Common myeloid progenitor, CD34-positive (primary cell): ENCODE measurements at regions of chr3 and their contacts with region 1.

Region 1: GRCh38 chr3:177050501-177051237 is 146.6 kb downstream of the TBL1XR1 start:
- DNase-seq: peak; percentile 61 to 81 (median 77)
- H3K4me3 ChIP-seq: no peak overlapping the region
- H3K27ac ChIP-seq: no peak overlapping the region
- H3K4me1 ChIP-seq: peaks cover 0 to 12% (median 0%) of the 10 kb centered on the region in 4 experiments
- H3K27me3 ChIP-seq: no peaks in the 10 kb centered on the region

Region 2: DNA sequence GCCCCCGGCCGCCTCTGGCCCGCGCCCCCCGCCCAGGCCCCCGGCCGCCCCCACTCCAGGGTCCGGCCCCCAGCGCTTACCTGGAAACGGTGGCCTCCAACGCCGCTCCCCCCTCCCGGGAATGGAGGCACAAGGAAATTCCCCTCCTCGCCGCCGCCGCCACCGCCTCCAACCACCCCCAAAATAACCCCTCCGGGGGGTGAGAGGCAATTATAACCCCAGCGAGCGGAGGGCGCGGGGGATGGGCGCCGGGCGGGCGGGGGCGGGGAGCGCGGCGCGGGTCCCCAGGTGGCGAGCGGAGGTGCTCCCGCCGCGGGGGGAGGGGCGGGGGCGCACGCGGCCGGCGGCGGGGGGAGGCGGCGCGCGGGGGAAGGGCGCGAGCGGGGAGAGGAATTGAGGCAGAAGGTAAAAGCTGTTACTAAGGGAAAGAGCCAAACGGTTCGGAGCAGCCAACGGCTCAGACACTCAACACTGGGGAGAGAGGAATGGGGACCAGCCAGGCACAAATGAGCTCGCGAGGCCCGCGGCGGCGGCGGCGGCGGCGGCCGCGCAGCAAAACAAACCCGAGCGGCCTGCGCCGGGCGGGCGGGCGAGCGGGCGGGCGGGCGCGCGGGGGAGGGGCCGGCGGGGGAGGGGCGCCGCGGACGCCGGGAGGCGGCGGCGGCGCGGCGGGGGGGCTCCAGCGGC is 146.5 kb after region 1 on chr3 and contains the start of gene TBL1XR1:
- CTCF ChIA-PET with region 1: interaction called, 11 read pairs
- POLR2A ChIA-PET with region 1: interaction called, 3 read pairs
- DNase-seq: peak; percentile 92 to 97 (median 97)
- H3K4me3 ChIP-seq: peak within 1 kb of the TSS; percentile 66 to 97 (median 93)
- H3K27ac ChIP-seq: peak within 1 kb of the TSS; percentile 93 to 95
- H3K4me1 ChIP-seq: peaks cover 24 to 40% (median 34%) of the 10 kb centered on the region in 4 experiments
- H3K27me3 ChIP-seq: no peaks in the 10 kb centered on the region

Region 3: DNA sequence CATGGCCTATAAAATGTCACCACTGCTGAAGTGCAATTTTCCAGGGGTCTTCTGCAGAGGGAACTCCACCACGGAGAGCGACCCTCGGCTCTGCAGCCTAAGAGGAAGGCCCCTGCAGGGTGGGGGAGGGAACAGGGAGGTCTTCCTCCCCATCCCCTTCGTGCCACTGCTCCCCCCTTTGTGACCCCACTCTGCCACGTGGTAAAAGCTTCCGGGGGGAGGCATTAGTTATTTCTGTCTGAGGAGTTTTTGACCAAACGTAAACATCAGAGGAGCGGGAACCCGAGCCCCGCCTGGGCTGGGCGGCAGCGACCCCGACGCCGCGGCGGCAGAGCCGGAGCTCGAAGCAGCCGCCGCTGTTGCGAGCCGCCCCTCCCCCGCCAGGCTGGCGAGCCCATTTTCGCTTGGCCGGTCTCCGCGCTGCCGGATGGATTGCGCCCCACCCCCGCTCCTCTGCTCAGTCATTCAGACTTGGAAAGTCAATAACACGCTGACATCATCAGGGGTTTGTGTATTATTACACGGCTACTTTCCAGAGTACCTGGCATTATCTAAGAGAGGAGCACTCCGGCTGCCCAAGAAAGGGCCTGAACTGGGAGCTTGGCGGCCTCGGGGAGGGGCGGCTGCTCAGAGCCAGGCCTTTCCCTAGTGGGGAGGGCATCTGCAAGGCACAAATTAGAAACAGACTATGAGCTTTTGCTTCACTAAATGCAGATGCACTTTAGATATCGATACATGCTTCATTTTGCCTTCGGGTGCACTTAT is 309.1 kb after region 1 on chr3:
- CTCF ChIA-PET with region 1: interaction called, 17 read pairs
- POLR2A ChIA-PET with region 1: interaction called, 6 read pairs
- DNase-seq: peak; percentile 96 to 98 (median 98)
- H3K4me3 ChIP-seq: peak overlapping the region in 6 of 7 experiments; percentile 57 to 85 (median 70)
- H3K27ac ChIP-seq: peak overlapping the region; percentile 86 to 95
- H3K4me1 ChIP-seq: peaks cover 28 to 61% (median 52%) of the 10 kb centered on the region in 4 experiments
- H3K27me3 ChIP-seq: no peaks in the 10 kb centered on the region

Region 4: DNA sequence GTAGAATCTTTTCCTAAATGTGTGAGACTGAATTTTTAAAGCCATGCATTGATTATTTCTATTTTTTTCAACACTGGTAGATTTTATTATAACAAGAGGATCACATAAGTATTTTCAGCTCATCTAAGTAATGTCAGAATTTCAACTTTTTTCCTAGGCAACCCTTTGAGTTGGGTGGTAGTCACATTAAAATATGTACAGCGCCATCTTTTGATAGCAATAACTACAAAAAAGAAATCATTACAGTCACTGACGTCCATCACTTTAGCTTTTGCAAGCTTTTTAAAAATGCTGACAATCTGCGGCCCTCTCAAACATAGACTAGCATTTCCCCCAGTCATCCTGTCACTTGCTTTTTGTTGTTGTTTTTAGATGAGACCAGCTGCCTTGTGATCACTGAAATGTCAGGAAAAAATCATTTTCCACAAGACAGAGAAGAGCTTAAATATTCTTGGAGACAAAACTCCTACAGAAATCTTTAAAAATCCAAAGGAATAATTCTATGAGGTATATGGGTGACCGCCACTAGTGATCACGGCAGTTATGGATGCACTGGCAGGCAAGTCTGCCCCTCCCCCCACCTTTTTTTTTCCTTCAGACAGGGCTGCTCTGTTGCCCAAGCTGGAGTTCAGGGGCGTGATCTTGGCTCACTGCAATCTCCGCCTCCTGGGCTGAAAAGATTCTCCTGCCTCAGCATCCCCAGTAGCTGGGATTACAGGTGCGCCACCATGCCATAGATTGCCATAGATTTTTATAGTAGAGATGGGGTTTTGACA is 1101.5 kb after region 1 on chr3:
- CTCF ChIA-PET with region 1: interaction called, 11 read pairs
- POLR2A ChIA-PET with region 1: no interaction called
- DNase-seq: no peak
- H3K4me3 ChIP-seq: no peak overlapping the region
- H3K27ac ChIP-seq: no peak overlapping the region
- H3K4me1 ChIP-seq: peaks cover 0 to 14% (median 2%) of the 10 kb centered on the region in 4 experiments
- H3K27me3 ChIP-seq: no peaks in the 10 kb centered on the region

Region 5: DNA sequence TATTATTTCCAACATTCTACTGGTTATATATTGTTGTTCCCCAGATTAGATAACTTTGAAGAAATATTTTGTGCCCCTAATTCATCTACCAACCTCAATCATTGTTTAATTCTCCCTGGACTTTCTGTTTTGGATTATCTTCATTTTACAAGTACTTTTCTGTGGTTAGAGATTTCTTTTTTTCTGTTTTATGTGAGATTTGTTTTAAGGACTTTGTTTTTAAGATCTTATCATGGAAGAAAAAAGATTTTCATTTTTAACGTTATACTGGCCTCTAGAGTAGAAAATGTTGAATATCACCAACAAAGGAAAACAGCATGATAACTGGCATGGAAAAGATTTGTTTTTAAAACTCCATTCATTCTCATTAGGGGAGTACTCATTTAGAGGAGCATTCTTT is 1274.7 kb after region 1 on chr3:
- CTCF ChIA-PET with region 1: interaction called, 11 read pairs
- POLR2A ChIA-PET with region 1: no interaction called
- DNase-seq: peak; percentile 41 to 62 (median 59)
- H3K4me3 ChIP-seq: no peak overlapping the region
- H3K27ac ChIP-seq: no peak overlapping the region
- H3K4me1 ChIP-seq: peaks cover 0 to 5% (median 0%) of the 10 kb centered on the region in 4 experiments
- H3K27me3 ChIP-seq: no peaks in the 10 kb centered on the region